ENCODE measurements at regions of chr9 and their contacts with region 1.

Region 1: GRCh38 chr9:129225815-129226214 is 47.8 kb upstream of the IER5L start:
- DNase-seq: peak; percentile 68 to 85
- H3K4me3 ChIP-seq: no peak overlapping the region
- H3K27ac ChIP-seq: peak overlapping the region; percentile 49
- H3K4me1 ChIP-seq: peaks cover 31% of the 10 kb centered on the region
- H3K27me3 ChIP-seq: no peaks in the 10 kb centered on the region
- CTCF ChIP-seq: no peak

Region 2: DNA sequence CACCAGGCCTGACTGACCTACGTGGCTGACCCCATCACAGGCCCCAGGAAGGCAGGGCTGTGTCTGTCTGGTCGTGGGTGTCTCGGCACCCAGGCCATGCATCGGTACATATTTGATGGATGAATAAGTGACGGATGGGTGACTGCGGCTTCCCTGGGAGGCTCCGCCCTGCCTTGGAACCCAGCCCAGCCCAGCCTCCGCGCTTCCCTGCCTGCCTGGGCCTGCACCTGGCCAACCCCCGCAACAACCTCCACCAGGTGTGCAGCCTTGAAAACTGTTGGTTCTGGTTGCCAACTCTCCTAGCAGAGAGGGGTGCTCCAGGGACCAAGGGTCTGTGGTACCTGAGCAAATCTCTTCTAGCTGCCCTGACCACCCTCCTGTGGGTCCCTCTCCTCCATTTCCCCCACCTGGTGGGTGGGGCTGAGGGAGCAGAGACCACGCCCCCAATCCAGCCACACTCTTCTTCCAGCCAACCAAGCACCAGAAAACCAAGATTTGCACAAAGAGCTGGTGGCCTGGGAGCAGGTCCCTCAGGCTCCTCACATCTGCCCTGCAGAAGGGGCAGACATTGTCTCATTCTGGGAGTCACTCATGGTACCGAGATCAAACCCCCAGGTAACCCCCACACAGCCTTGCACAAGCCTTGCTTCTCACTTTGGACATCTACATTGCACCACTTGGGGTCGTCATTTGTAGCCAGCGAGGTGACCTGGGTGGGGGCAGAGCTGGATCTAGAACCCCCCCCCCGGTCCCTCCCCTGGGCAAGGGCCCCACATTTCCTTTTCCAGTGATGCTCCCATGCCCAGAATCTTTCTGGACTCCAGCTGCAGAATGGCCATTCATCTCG is 52.8 kb after region 1 on chr9:
- CTCF ChIA-PET with region 1: no interaction called
- POLR2A ChIA-PET with region 1: no interaction called
- intact Hi-C with region 1: loop called (anchors 5 kb)
- DNase-seq: peak; percentile 86 to 97
- H3K4me3 ChIP-seq: peak overlapping the region; percentile 58; the same call in 1 of the 2 replicates
- H3K27ac ChIP-seq: peak overlapping the region; percentile 79
- H3K4me1 ChIP-seq: peaks cover 51% of the 10 kb centered on the region
- H3K27me3 ChIP-seq: no peaks in the 10 kb centered on the region
- CTCF ChIP-seq: no peak

Measured in PC-9 (cell line).